Calu3 (cell line): ENCODE measurements at regions of chr7 and their contacts with region 1.

Region 1: GRCh38 chr7:45469103-45469502 is 105.1 kb upstream of the ADCY1 start:
- DNase-seq: no peak
- H3K4me3 Mint-ChIP-seq: no peak overlapping the region
- H3K27ac Mint-ChIP-seq: no peak overlapping the region
- H3K4me1 Mint-ChIP-seq: no peaks in the 10 kb centered on the region
- H3K27me3 Mint-ChIP-seq: peaks cover 74% of the 10 kb centered on the region
- CTCF ChIP-seq: no peak

Region 2: DNA sequence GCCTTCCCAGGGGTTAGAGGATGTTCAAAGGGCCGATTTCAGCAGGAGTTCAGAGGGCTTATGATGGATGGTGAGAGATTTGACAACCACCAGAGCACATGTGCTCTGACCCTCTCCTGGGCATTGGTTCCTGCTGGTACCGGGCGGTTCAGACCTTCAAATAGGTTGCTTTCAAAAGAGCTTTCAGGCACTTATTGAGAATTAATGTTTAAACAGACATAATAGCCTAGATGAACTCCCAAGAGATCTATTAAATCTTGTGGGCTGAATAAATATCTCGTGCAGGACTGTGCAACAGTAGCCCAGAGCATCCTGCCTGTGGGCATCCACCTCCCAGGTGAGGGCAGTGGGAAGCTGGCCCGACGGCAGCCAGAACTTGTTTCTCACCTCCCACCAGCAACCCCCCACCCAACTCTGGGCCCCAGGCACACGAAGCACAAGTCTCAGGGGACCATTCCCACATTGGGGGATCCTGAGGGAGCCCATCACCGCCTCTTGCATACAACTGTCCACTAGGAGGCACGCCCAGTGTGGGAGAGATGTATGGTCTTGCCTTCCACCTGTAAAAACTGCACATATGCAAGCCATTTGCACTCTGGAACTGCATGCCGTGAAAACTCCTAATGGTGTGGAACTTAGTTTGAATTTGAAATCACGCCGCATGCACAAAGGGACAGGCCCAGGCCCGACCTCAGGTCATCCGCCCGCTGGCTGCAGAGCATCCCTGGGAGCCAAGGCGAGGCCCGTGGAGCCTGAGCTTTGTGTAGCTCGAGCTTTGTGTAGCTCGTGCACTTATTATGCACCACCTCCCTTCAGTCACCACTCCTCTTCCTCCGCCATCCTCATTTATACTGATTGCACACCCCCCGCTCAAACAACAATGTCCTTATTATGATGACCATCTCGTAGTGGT is 252.8 kb after region 1 on chr7:
- CTCF ChIA-PET with region 1: no interaction called
- intact Hi-C with region 1: no loop called
- DNase-seq: no peak
- H3K4me3 Mint-ChIP-seq: no peak overlapping the region
- H3K27ac Mint-ChIP-seq: no peak overlapping the region
- H3K4me1 Mint-ChIP-seq: no peaks in the 10 kb centered on the region
- H3K27me3 Mint-ChIP-seq: no peaks in the 10 kb centered on the region
- CTCF ChIP-seq: no peak

Region 3: GRCh38 chr7:46247664-46248063 is 778.6 kb after region 1 on chr7:
- CTCF ChIA-PET with region 1: interaction called, 11 read pairs
- intact Hi-C with region 1: no loop called
- DNase-seq: no peak
- H3K4me3 Mint-ChIP-seq: no peak overlapping the region
- H3K27ac Mint-ChIP-seq: no peak overlapping the region
- H3K4me1 Mint-ChIP-seq: peaks cover 8% of the 10 kb centered on the region
- H3K27me3 Mint-ChIP-seq: no peaks in the 10 kb centered on the region
- CTCF ChIP-seq: no peak